Activated naive CD4-positive, alpha-beta T cell treated with anti-CD3 and anti-CD28 coated beads for 36 hours (primary cell): ENCODE measurements at regions of chr16 and their contacts with region 1.

Region 1: GRCh38 chr16:50747207-50747956 is 5.5 kb downstream of the CYLD start:
- DNase-seq: peak; percentile 27
- H3K4me3 Mint-ChIP-seq: peak overlapping the region; percentile 67
- H3K27ac Mint-ChIP-seq: peak overlapping the region; percentile 93
- H3K4me1 Mint-ChIP-seq: peaks cover 62% of the 10 kb centered on the region
- H3K27me3 Mint-ChIP-seq: no peaks in the 10 kb centered on the region

Region 2: GRCh38 chr16:50326949-50327402 is 420.4 kb before region 1 on chr16:
- CTCF ChIA-PET with region 1: no interaction called
- intact Hi-C with region 1: loop called (anchors 2 kb)
- DNase-seq: peak; percentile 81
- H3K4me3 Mint-ChIP-seq: no peak overlapping the region
- H3K27ac Mint-ChIP-seq: peak overlapping the region; percentile 50
- H3K4me1 Mint-ChIP-seq: peaks cover 56% of the 10 kb centered on the region
- H3K27me3 Mint-ChIP-seq: no peaks in the 10 kb centered on the region

Region 3: GRCh38 chr16:50473356-50473945 is 273.9 kb before region 1 on chr16:
- CTCF ChIA-PET with region 1: interaction called, 3 read pairs
- intact Hi-C with region 1: loop called (anchors 5 kb)
- DNase-seq: peak; percentile 66
- H3K4me3 Mint-ChIP-seq: no peak overlapping the region
- H3K27ac Mint-ChIP-seq: peak overlapping the region; percentile 51
- H3K4me1 Mint-ChIP-seq: peaks cover 23% of the 10 kb centered on the region
- H3K27me3 Mint-ChIP-seq: peaks cover 4% of the 10 kb centered on the region

Region 4: DNA sequence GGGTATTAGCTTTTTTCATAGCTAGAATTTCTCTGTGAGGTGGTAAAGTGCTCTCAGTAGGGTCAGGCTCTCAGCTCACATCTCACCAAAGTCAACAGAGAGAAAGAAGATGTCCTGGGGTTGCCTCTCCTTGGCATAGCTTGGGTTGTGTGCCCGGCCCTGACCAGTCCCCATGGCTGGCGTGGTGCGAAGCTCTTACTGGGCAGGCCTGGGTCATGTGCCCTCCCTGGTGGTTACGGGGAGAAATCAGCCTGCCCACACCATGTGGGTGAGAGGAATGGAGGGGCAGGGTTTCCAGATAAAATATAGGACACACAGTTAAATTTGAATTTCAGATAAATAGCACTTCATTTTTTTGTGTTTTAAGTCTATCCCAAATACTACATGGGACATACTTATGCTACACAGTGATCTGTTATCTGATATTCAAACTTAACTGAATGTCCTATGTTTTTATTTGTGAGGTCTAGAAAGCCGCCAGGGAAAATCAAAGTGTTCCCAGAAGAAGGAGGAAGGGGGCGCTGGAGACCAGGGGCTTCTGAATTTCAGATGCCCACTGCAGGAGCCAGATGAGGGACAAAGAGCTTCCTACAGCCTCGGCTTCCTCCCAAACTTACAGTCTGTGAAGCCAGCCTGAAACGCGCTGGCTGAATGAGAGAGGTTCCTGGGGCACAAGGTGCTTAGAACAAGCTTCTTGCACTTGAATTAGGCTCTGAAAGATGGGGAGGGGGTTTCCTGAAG is 153.8 kb before region 1 on chr16:
- CTCF ChIA-PET with region 1: interaction called, 3 read pairs
- intact Hi-C with region 1: loop called (anchors 1 kb)
- DNase-seq: no peak
- H3K4me3 Mint-ChIP-seq: no peak overlapping the region
- H3K27ac Mint-ChIP-seq: no peak overlapping the region
- H3K4me1 Mint-ChIP-seq: peaks cover 28% of the 10 kb centered on the region
- H3K27me3 Mint-ChIP-seq: no peaks in the 10 kb centered on the region

Region 5: DNA sequence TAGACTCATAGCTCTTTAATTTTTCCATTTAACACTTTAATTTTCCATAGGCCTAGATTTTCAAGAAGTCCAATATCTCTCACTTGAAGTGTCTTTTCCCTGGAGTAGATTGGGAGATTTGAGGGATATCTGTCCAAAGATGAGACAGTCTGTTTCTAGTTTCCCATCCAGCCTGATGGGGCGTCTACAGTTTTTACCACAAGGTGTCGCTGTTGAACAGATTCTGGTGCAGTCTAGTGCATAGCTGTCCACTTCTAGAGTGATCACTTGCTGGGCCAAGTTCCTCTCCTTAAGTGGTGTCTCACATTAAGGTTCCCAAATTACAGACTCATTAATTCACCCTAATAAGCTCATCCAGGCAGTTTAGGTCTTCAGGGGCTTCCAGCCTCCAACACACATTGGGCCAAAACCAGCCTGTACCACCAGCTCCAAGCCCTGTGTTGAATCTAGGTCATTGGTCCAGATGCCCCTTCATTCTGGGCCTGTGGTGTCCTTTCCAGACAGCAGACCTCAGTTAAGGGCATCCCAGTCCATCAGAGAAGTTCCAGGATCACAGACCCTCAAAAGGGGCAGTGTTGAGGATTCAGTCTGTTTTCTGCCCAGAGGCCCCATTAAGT is 75.6 kb before region 1 on chr16:
- CTCF ChIA-PET with region 1: interaction called, 532 read pairs
- intact Hi-C with region 1: loop called (anchors 1 kb)
- DNase-seq: peak; percentile 82
- H3K4me3 Mint-ChIP-seq: no peak overlapping the region
- H3K27ac Mint-ChIP-seq: peak overlapping the region; percentile 84
- H3K4me1 Mint-ChIP-seq: peaks cover 29% of the 10 kb centered on the region
- H3K27me3 Mint-ChIP-seq: no peaks in the 10 kb centered on the region

Region 6: DNA sequence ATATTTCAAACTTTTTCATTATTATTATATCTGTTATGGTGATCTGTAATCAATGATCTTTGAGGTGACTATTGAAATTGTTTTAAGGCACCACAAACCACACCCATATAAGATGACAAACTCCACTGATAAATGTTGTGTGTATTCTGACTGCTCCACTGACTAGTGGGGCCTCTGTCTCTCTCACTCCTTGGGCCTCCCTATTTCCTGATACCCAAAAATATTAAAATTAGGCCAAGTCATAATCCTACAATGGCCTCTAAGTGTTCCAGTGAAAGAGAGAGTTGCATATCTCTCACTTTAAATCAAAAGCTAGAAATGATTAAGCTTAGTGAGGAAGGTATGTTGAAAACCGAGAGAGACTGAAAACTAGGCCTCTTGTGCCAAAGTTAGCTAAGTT is 17.9 kb after region 1 on chr16:
- CTCF ChIA-PET with region 1: interaction called, 5 read pairs
- intact Hi-C with region 1: loop called (anchors 1 kb)
- DNase-seq: peak; percentile 23
- H3K4me3 Mint-ChIP-seq: peak overlapping the region; percentile 14
- H3K27ac Mint-ChIP-seq: peak overlapping the region; percentile 79
- H3K4me1 Mint-ChIP-seq: peaks cover 89% of the 10 kb centered on the region
- H3K27me3 Mint-ChIP-seq: no peaks in the 10 kb centered on the region

Region 7: GRCh38 chr16:50861970-50862411 is 114.6 kb after region 1 on chr16:
- CTCF ChIA-PET with region 1: no interaction called
- intact Hi-C with region 1: no loop called
- DNase-seq: no peak
- H3K4me3 Mint-ChIP-seq: no peak overlapping the region
- H3K27ac Mint-ChIP-seq: no peak overlapping the region
- H3K4me1 Mint-ChIP-seq: no peaks in the 10 kb centered on the region
- H3K27me3 Mint-ChIP-seq: no peaks in the 10 kb centered on the region